ENCODE measurements at regions of chr16 and their contacts with region 1.

Region 1: GRCh38 chr16:11851294-11852091 is at the start of gene RSL1D1:
- DNase-seq: peak; percentile 94
- ATAC-seq: peak; percentile 87
- H3K4me3 ChIP-seq: peak within 1 kb of the TSS; percentile 80 to 99 (median 99)
- H3K27ac ChIP-seq: peak within 1 kb of the TSS; percentile 87
- H3K4me1 ChIP-seq: peaks cover 63% of the 10 kb centered on the region
- H3K27me3 ChIP-seq: no peaks in the 10 kb centered on the region; a peak in 2 of 5 replicates
- CTCF ChIP-seq: no peak
- EP300 ChIP-seq: peak in 1 of 2 experiments; percentile 38; a peak in 3 of 4 replicates
- POLR2A ChIP-seq: peak; percentile 99
- RAD21 ChIP-seq: peak; percentile 7; the same call in 1 of the 2 replicates
- total RNA-seq, gene RSL1D1: 343 and 502 TPM in 2 replicates

Region 2: GRCh38 chr16:11783319-11784037 is 68.0 kb before region 1 on chr16:
- CTCF ChIA-PET with region 1: no interaction called
- POLR2A ChIA-PET with region 1: interaction called, 3 read pairs
- in situ Hi-C with region 1: no loop called
- intact Hi-C with region 1: loop called (anchors 2 kb)
- DNase-seq: no peak
- ATAC-seq: no peak
- H3K4me3 ChIP-seq: no peak overlapping the region
- H3K27ac ChIP-seq: peak overlapping the region; percentile 9
- H3K4me1 ChIP-seq: peaks cover 68% of the 10 kb centered on the region
- H3K27me3 ChIP-seq: no peaks in the 10 kb centered on the region
- CTCF ChIP-seq: no peak
- EP300 ChIP-seq: no peak
- POLR2A ChIP-seq: no peak
- RAD21 ChIP-seq: no peak

Region 3: GRCh38 chr16:11819798-11820197 is 31.7 kb before region 1 on chr16:
- CTCF ChIA-PET with region 1: no interaction called
- POLR2A ChIA-PET with region 1: interaction called, 12 read pairs
- in situ Hi-C with region 1: no loop called
- intact Hi-C with region 1: no loop called
- DNase-seq: no peak
- ATAC-seq: no peak
- H3K4me3 ChIP-seq: no peak overlapping the region
- H3K27ac ChIP-seq: no peak overlapping the region
- H3K4me1 ChIP-seq: peaks cover 43% of the 10 kb centered on the region
- H3K27me3 ChIP-seq: 0 out of 5 replicates have a peak, but pooled peaks cover 0 to 5% of the 10 kb centered on the region in 2 experiments
- CTCF ChIP-seq: no peak
- EP300 ChIP-seq: no peak
- POLR2A ChIP-seq: no peak
- RAD21 ChIP-seq: no peak

Region 4: DNA sequence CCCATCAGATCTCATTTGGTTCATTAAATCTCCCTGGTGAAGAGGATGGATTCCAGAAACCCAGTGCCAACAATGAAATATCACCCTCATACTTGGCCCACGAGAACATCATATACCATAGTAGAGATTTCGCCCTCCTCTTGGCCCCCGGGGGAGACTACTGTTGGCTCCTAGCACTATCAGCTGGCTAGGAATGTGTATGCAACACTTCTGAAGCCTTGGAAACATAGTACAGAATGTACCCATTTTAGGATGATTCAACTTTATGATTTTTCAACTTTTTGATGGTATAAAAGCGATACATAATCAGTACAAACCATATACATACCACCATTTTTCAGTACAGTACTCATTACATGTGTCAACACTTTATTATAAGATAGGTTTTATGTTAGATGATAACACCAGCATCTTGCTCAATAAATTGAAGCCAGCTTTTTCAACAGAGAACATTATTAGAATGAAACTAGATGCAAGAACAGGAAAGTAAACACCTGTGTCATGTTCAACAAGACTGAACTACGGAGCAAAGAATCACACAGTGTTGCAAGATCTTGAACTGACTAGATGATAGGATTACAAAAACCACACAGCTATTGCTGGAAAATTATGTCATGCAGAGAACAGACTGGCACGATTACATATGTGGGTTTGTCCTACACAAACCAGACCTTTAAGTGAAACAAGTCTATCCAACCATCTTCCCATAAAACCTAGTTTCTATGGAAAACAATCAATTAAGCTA is 17.4 kb before region 1 on chr16:
- CTCF ChIA-PET with region 1: no interaction called
- POLR2A ChIA-PET with region 1: interaction called, 72 read pairs
- in situ Hi-C with region 1: no loop called
- intact Hi-C with region 1: loop called (anchors 2 kb)
- DNase-seq: peak; percentile 84
- ATAC-seq: peak; percentile 61
- H3K4me3 ChIP-seq: no peak overlapping the region
- H3K27ac ChIP-seq: no peak overlapping the region
- H3K4me1 ChIP-seq: peaks cover 28% of the 10 kb centered on the region
- H3K27me3 ChIP-seq: no peaks in the 10 kb centered on the region
- CTCF ChIP-seq: no peak
- EP300 ChIP-seq: peak in 1 of 2 experiments; percentile 41; a peak in 2 of 4 replicates
- POLR2A ChIP-seq: no peak
- RAD21 ChIP-seq: no peak

Region 5: DNA sequence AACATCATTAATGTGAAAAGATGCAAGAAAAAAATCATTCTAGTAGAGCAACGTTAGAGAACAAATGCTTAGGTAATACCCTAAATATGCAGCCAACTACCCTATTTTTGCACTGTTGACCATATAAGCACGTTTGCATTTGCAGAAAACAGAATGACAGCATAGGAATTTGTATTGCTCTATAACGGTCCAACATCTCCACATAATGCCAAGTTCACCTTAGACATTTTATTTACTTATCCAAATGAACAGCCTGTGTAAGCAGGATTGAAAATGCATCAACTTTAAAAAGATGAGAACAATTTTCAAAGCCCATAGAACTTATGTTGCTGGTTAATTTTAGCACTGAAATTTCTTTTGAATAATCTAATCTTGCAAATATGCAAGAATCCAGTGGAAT is 18.9 kb after region 1 on chr16:
- CTCF ChIA-PET with region 1: no interaction called
- POLR2A ChIA-PET with region 1: interaction called, 11 read pairs
- in situ Hi-C with region 1: no loop called
- intact Hi-C with region 1: no loop called
- DNase-seq: peak; percentile 31
- ATAC-seq: no peak
- H3K4me3 ChIP-seq: no peak overlapping the region
- H3K27ac ChIP-seq: peak overlapping the region; percentile 36
- H3K4me1 ChIP-seq: peaks cover 65% of the 10 kb centered on the region
- H3K27me3 ChIP-seq: no peaks in the 10 kb centered on the region
- CTCF ChIP-seq: no peak
- EP300 ChIP-seq: no peak
- POLR2A ChIP-seq: no peak
- RAD21 ChIP-seq: no peak

Measured in HepG2 (cell line).